IMR-90 (cell line): ENCODE measurements at regions of chr2 and their contacts with region 1.

Region 1: DNA sequence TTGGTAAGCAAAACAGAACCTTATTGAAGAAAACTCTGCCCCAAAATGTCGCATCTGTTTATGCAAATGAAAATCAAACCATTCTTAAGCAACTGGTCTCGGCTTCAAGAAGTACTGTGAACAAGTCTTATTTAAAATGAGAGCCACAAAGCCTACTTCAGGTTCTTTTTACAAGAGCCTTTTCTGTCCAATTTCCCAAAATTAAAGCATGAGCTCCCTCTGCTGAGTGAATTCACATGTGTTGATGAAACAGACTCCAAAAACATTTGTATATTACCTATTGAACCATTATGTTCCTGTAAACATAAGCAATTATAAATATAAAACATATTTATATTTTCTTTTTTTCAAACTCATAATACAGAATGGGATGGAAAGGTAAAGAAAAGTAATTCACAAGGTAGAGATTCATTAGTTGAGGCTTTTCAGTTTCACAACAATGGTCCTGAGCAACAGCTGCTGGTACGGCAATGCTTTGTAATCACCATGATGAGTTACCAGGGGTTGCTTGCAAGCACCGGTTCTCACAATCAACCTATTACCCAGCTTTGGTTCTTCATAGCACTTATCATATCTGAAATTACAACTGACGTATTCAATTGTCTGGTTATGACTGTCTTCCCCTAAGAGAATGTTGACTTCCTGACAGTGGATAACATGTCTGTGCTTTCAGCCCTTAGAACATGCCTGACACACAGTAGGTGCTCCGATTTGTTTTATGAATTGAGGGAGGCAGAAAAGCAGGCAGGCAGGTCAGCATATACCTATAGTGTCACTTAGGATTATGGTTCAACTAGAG is 108.4 kb upstream of the BZW1 start:
- DNase-seq: peak; percentile 80
- ATAC-seq: peak; percentile 73
- H3K4me3 ChIP-seq: no peak overlapping the region
- H3K27ac ChIP-seq: no peak overlapping the region
- H3K4me1 ChIP-seq: no peaks in the 10 kb centered on the region
- H3K27me3 ChIP-seq: peaks cover 7% of the 10 kb centered on the region
- CTCF ChIP-seq: peak; percentile 88
- POLR2A ChIP-seq: no peak
- RAD21 ChIP-seq: peak; percentile 91

Region 2: GRCh38 chr2:198905881-198906612 is 1797.3 kb before region 1 on chr2:
- CTCF ChIA-PET with region 1: no interaction called
- POLR2A ChIA-PET with region 1: no interaction called
- dilution Hi-C with region 1: no loop called
- in situ Hi-C with region 1: no loop called
- intact Hi-C with region 1: no loop called
- DNase-seq: no peak
- ATAC-seq: no peak
- H3K4me3 ChIP-seq: no peak overlapping the region
- H3K27ac ChIP-seq: no peak overlapping the region
- H3K4me1 ChIP-seq: no peaks in the 10 kb centered on the region
- H3K27me3 ChIP-seq: no peaks in the 10 kb centered on the region
- CTCF ChIP-seq: no peak
- POLR2A ChIP-seq: no peak
- RAD21 ChIP-seq: no peak

Region 3: GRCh38 chr2:199973703-199974102 is 729.6 kb before region 1 on chr2:
- CTCF ChIA-PET with region 1: no interaction called
- POLR2A ChIA-PET with region 1: interaction called, 5 read pairs
- dilution Hi-C with region 1: no loop called
- in situ Hi-C with region 1: loop called (anchors 10 kb)
- intact Hi-C with region 1: loop called (anchors 1 kb)
- DNase-seq: peak; percentile 71
- ATAC-seq: peak; percentile 76
- H3K4me3 ChIP-seq: no peak overlapping the region
- H3K27ac ChIP-seq: no peak overlapping the region
- H3K4me1 ChIP-seq: peaks cover 4% of the 10 kb centered on the region; the same call in 1 of the 2 replicates
- H3K27me3 ChIP-seq: no peaks in the 10 kb centered on the region
- CTCF ChIP-seq: peak; percentile 72
- POLR2A ChIP-seq: 0 out of 2 replicates have a peak, but pooled peaks have one; percentile 36
- RAD21 ChIP-seq: peak; percentile 91

Region 4: DNA sequence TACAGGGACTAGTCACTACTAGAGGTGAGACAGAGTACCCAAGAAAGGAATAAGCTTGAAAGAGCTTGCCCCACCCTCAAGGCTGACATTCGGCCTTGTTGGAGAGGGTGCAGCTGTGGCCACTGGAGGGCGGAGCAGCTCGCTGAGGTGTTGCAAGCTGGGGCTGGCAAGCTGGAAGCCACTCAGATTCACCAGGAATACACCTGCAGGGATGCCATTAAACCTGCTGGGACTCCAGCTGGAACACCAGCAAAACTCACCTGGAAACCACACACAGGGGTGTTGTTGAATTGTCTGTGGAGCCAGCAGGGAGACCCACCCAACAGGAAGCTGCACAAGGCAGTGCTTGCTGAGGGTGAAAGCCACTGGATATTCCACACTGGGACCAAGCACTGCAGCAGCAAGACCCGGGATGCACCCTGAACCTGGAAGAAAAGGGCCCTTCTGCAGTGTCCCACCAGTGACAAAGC is 219.6 kb before region 1 on chr2:
- CTCF ChIA-PET with region 1: interaction called, 10 read pairs
- POLR2A ChIA-PET with region 1: no interaction called
- dilution Hi-C with region 1: no loop called
- in situ Hi-C with region 1: no loop called
- intact Hi-C with region 1: loop called (anchors 5 kb)
- DNase-seq: peak; percentile 25
- ATAC-seq: no peak
- H3K4me3 ChIP-seq: no peak overlapping the region
- H3K27ac ChIP-seq: no peak overlapping the region
- H3K4me1 ChIP-seq: peaks cover 19% of the 10 kb centered on the region
- H3K27me3 ChIP-seq: no peaks in the 10 kb centered on the region
- CTCF ChIP-seq: peak; percentile 25; the same call in 1 of the 2 replicates
- POLR2A ChIP-seq: no peak
- RAD21 ChIP-seq: no peak

Region 5: GRCh38 chr2:200525882-200526651 is 177.3 kb before region 1 on chr2 and contains the start of gene SGO2:
- CTCF ChIA-PET with region 1: no interaction called
- POLR2A ChIA-PET with region 1: no interaction called
- dilution Hi-C with region 1: no loop called
- in situ Hi-C with region 1: no loop called
- intact Hi-C with region 1: loop called (anchors 1 kb)
- DNase-seq: peak; percentile 91
- ATAC-seq: peak; percentile 99
- H3K4me3 ChIP-seq: peak within 1 kb of the TSS; percentile 97
- H3K27ac ChIP-seq: peak within 1 kb of the TSS; percentile 72
- H3K4me1 ChIP-seq: no peaks in the 10 kb centered on the region
- H3K27me3 ChIP-seq: peaks cover 11% of the 10 kb centered on the region
- CTCF ChIP-seq: no peak
- POLR2A ChIP-seq: peak; percentile 48; the same call in 1 of the 2 replicates
- RAD21 ChIP-seq: no peak
- total RNA-seq, gene SGO2: 6.3 and 16.9 TPM in 2 replicates

Region 6: GRCh38 chr2:200578778-200579177 is 124.5 kb before region 1 on chr2:
- CTCF ChIA-PET with region 1: interaction called, 7 read pairs
- POLR2A ChIA-PET with region 1: no interaction called
- dilution Hi-C with region 1: no loop called
- in situ Hi-C with region 1: loop called (anchors 5 kb)
- intact Hi-C with region 1: loop called (anchors 1 kb)
- DNase-seq: peak; percentile 35
- ATAC-seq: peak; percentile 37; the same call in 1 of the 2 replicates
- H3K4me3 ChIP-seq: no peak overlapping the region
- H3K27ac ChIP-seq: no peak overlapping the region
- H3K4me1 ChIP-seq: no peaks in the 10 kb centered on the region
- H3K27me3 ChIP-seq: no peaks in the 10 kb centered on the region
- CTCF ChIP-seq: peak; percentile 46
- POLR2A ChIP-seq: no peak
- RAD21 ChIP-seq: peak; percentile 64

Region 7: DNA sequence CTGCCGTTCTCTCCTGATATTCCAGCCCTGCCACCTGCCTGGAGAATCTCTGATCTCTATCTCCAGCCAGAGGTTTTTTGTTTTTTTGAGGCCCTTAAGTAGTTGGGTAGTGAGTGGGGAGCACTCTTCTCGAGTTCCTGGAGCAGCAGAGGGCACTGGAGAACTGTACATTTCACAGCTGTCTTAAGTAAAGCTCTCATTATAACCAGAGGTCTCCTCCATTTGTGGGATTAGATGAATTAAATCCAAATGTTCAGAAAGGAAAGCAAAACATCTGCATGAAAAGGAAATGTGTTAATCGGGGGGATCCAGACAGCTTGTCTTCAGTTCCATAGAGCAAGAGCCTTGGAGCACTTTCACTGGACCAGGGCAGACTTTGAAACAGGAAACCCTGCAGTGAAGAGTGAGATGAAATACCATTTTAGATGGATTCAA is 84.7 kb before region 1 on chr2:
- CTCF ChIA-PET with region 1: interaction called, 4 read pairs
- POLR2A ChIA-PET with region 1: no interaction called
- dilution Hi-C with region 1: no loop called
- in situ Hi-C with region 1: no loop called
- intact Hi-C with region 1: loop called (anchors 1 kb)
- DNase-seq: peak; percentile 78
- ATAC-seq: peak; percentile 73
- H3K4me3 ChIP-seq: no peak overlapping the region
- H3K27ac ChIP-seq: no peak overlapping the region; the same call in 1 of the 2 replicates
- H3K4me1 ChIP-seq: peaks cover 20% of the 10 kb centered on the region
- H3K27me3 ChIP-seq: no peaks in the 10 kb centered on the region
- CTCF ChIP-seq: peak; percentile 53
- POLR2A ChIP-seq: no peak
- RAD21 ChIP-seq: peak; percentile 53